ENCODE measurements at regions of chr7 and their contacts with region 1.

Region 1: GRCh38 chr7:1432411-1433082 is 26.7 kb downstream of the MICALL2 start:
- DNase-seq: peak; percentile 80
- H3K4me3 ChIP-seq: no peak overlapping the region
- H3K27ac ChIP-seq: no peak overlapping the region
- H3K4me1 ChIP-seq: peaks cover 13% of the 10 kb centered on the region
- H3K27me3 ChIP-seq: no peaks in the 10 kb centered on the region
- CTCF ChIP-seq: peak; percentile 97

Region 2: DNA sequence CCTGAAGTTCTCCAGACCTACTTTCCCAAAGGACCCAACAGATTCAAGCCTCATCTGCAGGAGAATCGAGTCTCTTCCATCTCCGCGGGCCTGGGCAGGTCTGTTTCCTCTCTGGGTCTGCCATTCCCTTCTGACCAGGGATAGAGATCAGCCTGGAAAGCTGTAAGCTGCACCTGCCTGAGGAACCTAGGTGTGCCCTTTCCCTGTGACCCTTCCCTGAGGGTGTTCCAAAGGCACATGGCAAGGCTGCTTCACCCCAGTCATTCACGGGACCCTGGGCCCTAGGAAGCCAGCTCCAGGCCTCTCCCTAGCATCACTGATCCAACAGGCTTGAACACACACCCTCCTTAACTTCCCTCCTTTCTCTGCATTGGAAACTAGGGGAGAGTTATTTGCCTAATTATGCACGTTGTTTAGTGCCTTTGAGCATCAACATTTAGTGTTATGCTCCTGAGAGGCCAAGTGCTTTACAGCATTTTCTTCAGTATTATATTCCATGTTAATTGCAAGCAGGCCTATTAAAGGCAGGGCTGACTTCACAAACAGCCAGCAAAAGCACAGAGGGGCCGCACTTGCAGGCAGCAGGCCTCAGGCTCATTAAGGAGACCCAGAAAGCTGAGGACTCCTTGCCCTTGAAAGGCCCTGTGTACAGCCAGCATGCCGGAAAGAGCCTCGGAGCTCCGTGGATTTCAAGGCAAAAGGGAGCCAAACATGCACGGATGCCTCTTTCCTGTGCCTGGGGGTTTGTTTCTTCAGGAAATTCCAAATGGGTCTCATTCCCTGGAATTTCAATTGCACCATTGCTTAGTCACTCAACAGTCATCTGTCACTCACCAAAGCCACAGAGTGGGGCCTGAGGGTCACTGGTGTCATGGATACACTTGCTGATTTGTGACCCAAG is 1331.2 kb before region 1 on chr7:
- CTCF ChIA-PET with region 1: no interaction called
- POLR2A ChIA-PET with region 1: no interaction called
- intact Hi-C with region 1: no loop called
- DNase-seq: no peak
- H3K4me3 ChIP-seq: no peak overlapping the region
- H3K27ac ChIP-seq: no peak overlapping the region
- H3K4me1 ChIP-seq: no peaks in the 10 kb centered on the region
- H3K27me3 ChIP-seq: no peaks in the 10 kb centered on the region
- CTCF ChIP-seq: no peak

Region 3: DNA sequence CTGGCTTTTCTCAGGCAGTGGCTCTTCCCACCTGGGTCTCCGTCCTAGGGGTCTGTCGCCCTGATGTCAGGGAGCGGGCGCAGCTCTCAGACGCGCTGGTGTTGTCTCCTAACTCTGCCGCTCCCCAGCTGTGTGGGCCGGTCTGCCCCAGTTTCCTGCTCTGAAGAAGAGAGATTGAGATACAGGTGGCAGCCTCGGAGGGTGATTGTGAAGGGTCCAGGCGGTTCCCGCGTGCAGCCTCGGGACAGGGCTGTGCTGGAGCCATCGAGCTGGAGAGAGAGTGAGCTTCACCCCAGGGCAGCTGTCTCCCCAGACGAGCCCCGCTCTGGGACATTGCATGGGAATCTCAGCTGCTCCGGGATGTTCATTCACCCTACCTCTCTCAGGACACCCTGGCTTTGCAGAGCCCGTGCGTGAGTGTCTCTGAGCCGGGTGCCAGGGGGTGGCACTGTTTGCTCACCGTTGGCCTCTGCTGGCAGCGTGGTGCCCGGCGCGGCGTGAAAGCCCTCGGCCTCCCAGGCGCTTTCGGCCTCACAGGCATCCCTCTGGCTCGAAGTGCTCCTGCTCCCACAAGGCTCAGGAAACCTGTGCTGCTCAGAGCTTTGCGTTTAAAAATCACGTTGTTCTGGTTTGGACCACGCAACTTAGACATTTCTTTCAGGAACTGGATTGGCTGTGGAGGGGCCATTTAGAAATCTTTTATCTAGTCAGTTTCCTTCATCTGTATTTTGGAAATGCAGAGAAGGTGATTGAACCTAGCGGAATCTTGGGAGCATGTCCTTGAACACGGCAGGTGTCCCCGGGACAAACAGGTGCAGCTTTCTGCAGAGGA is 238.7 kb before region 1 on chr7:
- CTCF ChIA-PET with region 1: interaction called, 5 read pairs
- POLR2A ChIA-PET with region 1: no interaction called
- intact Hi-C with region 1: loop called (anchors 1 kb)
- DNase-seq: peak; percentile 81
- H3K4me3 ChIP-seq: no peak overlapping the region
- H3K27ac ChIP-seq: no peak overlapping the region
- H3K4me1 ChIP-seq: peaks cover 9% of the 10 kb centered on the region
- H3K27me3 ChIP-seq: no peaks in the 10 kb centered on the region
- CTCF ChIP-seq: peak; percentile 86

Measured in A673 (cell line).